GM13976 (cell line): ENCODE measurements at regions of chr12 and their contacts with region 1.

Region 1: GRCh38 chr12:20946732-20947131 is 136.2 kb downstream of the SLCO1B3 start:
- DNase-seq: peak; percentile 3
- CTCF ChIP-seq: peak; percentile 46

Region 2: DNA sequence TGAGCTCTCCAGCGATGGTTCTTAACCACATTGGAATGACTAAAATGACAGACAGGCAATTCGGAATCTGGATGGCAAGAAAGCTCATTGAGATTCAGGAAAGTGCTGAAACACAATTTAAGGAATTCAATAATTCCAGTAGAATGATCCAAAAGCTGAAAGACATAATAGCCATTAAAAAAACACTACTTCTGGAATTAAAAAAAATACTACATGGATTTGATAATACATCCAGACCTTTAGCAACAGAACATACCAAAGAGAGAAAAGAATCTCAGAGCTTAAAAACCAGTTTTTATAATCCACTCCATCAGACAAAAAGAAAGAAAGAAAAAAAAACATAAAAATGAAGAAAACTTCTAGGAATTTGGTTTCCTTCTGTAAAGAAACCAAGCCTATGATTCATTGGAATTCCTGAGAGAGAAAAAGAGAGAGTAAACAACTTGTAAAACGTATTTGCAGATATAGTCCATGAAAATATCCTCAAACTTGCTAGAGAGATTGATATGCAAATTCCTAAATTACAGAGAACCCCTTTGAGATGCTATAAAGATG is 237.1 kb after region 1 on chr12:
- in situ Hi-C with region 1: loop called (anchors 25 kb)
- DNase-seq: no peak
- CTCF ChIP-seq: no peak